Activated T-helper 1 cell treated with anti-CD3 and anti-CD28 coated beads, Interleukin-12 subunit alpha, Interleukin-12 subunit beta, Interleukin-2, Interleukin-4 antibody, amounts not matched to agents 30 ng/mL and 10 ng/mL and 1 ng/mL, durations not matched to agents 14 hours and 24 hours and 36 hours (primary cell): ENCODE measurements at regions of chr17 and their contacts with region 1.

Region 1: DNA sequence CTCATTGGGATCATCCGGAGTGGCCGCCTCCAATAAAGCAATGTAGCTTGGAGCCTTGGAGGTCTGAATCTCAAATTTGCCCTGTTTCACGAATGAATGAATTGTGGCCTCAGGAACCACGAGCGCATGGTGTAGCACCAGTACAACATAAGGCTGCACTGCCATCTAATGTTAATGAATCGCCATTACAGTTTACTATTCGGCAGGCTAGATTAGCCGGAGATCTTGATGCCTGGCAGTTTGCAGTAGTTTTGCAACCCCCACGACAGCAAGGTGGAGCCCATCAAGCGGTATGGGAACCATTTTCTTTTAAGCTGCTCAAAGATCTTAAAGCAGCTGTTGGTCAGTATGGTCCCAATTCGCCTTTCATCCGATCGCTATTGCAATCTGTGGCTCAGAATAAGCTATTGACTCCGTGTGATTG is 18.8 kb downstream of the ALOX15B start:
- DNase-seq: peak; percentile 26
- H3K4me3 Mint-ChIP-seq: no peak overlapping the region
- H3K27ac Mint-ChIP-seq: no peak overlapping the region
- H3K4me1 Mint-ChIP-seq: peaks cover 27% of the 10 kb centered on the region
- H3K27me3 Mint-ChIP-seq: peaks cover 50% of the 10 kb centered on the region

Region 2: DNA sequence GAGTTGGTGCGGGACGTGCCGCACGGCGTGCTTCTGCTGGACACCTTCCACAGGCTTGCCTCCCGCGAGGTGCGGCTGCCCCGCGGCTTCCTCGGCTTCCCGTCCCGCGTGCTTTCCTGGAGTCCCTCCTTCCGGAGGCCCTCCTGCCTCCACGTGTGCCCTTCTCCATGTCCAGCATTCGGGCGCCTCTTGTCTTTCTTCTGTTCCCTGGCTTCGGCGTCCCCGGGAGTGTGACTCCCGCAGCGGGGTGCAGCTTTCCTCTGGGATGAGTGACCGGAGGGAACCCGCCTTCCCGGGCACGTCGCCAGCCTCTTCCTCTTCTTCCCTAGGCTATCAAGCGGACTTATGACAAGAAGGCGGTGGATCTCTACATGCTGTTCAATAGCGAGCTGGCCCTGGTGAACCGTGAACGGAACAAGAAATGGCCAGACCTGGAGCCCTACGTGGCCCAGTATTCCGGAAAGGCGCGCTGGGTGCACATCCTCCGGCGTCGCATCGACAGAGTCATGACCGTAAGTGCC is 317.2 kb before region 1 on chr17:
- intact Hi-C with region 1: loop called (anchors 5 kb)
- DNase-seq: no peak
- H3K4me3 Mint-ChIP-seq: no peak overlapping the region
- H3K27ac Mint-ChIP-seq: no peak overlapping the region
- H3K4me1 Mint-ChIP-seq: no peaks in the 10 kb centered on the region
- H3K27me3 Mint-ChIP-seq: peaks cover 17% of the 10 kb centered on the region

Region 3: DNA sequence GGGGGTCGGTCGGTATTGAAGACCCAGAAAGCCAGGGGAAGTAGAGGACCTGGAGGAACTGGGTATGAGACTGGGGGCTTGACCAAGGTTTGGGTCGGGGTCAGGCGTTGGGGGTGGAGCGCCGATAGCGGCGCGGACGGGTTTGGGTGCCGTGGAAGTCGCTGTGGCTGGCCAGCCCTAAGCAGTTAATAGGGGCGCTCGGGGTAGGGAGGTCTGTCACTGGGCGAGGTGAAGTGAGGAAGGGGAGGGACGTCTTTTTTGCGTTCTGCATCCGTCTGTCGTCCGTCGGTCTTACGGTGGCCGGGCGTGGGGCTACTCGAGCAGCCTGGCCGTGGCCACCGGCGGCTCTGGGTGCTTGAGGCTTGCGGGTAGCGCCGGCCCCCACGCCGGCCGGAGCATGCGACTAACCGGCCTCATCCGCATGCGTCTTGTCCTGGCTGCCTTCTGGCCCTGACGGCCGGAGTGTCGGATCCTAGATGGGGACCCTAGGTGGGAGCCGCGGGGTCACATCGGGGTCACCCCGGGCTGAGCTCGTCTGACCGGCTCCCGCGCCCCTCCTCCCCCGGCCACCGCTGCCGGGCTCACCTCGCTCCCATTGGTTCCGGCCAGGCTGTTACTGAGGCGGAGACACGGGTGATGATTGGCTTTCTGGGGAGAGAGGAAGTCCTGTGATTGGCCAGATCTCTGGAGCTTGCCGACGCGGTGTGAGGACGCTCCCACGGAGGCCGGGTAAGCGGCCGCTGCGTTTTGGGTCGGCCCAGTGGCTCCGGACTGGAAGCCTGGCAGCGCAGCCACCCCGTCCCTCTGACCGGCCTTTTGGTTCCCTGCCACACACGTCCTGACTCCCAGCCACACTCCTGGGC is 213.2 kb before region 1 on chr17:
- intact Hi-C with region 1: loop called (anchors 5 kb)
- DNase-seq: peak; percentile 87
- H3K4me3 Mint-ChIP-seq: peak overlapping the region; percentile 89
- H3K27ac Mint-ChIP-seq: peak overlapping the region; percentile 96
- H3K4me1 Mint-ChIP-seq: peaks cover 37% of the 10 kb centered on the region
- H3K27me3 Mint-ChIP-seq: no peaks in the 10 kb centered on the region

Region 4: GRCh38 chr17:7897773-7898172 is 159.9 kb before region 1 on chr17:
- intact Hi-C with region 1: no loop called
- DNase-seq: no peak
- H3K4me3 Mint-ChIP-seq: peak overlapping the region; percentile 3
- H3K27ac Mint-ChIP-seq: peak overlapping the region; percentile 79
- H3K4me1 Mint-ChIP-seq: peaks cover 8% of the 10 kb centered on the region
- H3K27me3 Mint-ChIP-seq: no peaks in the 10 kb centered on the region

Region 5: DNA sequence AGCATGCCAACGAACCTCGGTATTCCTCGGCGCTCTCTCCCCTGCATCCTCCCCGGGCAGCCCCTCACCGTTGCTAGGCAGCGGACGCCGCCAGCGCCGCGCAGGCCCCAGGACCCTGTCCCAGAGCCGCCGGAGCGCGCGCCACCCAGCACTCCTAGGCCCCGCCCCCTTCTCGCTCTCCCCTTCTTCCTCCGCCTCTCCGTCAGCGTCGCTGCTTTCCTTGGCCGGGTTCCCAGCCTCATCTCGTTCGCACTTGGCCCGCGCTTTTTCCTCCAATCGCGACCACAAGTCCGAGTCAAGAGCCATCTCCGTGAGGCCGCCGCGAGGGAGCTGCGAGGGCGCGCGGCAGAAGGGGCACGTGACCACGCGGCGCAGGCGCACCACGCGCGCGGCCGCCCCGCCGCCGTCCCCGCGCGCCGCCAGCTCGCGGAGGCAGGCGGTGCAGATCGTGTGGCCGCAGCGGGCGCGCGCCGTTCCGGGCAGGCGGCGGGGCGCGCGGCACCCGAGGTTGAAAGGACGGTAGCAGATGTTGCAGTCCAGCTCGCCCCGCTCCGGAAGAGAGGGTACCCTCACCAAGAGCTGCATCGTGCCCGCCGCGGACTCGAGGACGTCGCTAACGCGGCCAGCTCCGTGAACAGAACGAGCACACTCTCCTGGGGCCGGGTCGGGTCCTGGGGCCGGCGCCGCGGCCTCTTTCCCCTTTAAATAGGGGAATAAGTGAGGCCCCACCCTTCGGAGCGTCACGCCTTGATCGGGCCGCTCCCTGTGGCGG is 141.9 kb before region 1 on chr17 and contains the start of gene RNF227:
- intact Hi-C with region 1: loop called (anchors 1 kb)
- DNase-seq: peak; percentile 77
- H3K4me3 Mint-ChIP-seq: peak within 1 kb of the TSS; percentile 92
- H3K27ac Mint-ChIP-seq: peak within 1 kb of the TSS; percentile 96
- H3K4me1 Mint-ChIP-seq: peaks cover 33% of the 10 kb centered on the region
- H3K27me3 Mint-ChIP-seq: no peaks in the 10 kb centered on the region
- total RNA-seq, gene RNF227: 6.2 and 6.3 TPM in 2 replicates

Region 6: DNA sequence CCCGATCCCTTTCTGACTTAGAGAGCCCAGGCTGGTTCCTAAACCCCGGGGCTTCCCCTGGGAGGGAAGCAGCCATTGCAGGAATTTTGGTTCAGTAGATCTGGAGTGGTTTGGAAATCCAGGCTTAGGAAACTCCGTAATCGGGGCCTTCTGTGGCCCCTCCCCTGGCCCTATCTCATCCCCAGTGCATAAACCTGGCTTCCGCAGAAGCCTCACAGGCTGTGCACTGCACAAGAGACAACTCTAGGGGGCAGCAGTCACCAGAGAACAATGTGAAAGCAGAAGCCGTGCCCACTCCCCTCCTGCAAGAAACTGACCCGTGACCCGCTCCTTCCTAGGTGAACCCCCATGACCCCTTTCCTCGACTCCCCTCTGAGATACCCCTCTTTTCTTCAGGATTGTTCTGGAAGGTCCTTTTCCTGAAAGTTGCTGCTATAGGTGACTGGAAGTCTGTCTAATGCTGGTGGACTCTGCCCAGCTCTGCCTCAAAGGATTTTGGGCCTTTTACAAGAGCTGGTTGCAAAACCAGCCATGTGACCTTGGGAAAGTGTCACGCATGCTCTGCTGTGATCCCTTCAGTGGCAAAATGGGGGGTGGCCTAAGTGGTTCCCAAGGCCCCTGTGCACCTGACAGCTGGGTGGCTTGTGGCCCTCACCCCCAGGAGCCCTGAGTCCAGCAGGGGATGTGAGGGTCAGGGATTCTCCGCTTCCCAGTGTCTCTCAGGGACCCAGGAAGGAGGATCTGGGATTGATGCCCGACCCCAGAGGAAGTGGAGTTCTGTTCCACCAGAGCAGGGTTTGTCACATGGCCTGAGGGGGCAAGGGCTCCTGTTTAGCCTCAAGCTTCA is 40.8 kb before region 1 on chr17:
- intact Hi-C with region 1: loop called (anchors 1 kb)
- DNase-seq: peak; percentile 44
- H3K4me3 Mint-ChIP-seq: peak overlapping the region; percentile 81
- H3K27ac Mint-ChIP-seq: no peak overlapping the region
- H3K4me1 Mint-ChIP-seq: peaks cover 12% of the 10 kb centered on the region
- H3K27me3 Mint-ChIP-seq: peaks cover 30% of the 10 kb centered on the region

Region 7: GRCh38 chr17:8073627-8074484 is 16.2 kb after region 1 on chr17:
- intact Hi-C with region 1: loop called (anchors 1 kb)
- DNase-seq: peak; percentile 75
- H3K4me3 Mint-ChIP-seq: peak overlapping the region; percentile 72
- H3K27ac Mint-ChIP-seq: peak overlapping the region; percentile 57
- H3K4me1 Mint-ChIP-seq: peaks cover 22% of the 10 kb centered on the region
- H3K27me3 Mint-ChIP-seq: peaks cover 43% of the 10 kb centered on the region

Region 8: DNA sequence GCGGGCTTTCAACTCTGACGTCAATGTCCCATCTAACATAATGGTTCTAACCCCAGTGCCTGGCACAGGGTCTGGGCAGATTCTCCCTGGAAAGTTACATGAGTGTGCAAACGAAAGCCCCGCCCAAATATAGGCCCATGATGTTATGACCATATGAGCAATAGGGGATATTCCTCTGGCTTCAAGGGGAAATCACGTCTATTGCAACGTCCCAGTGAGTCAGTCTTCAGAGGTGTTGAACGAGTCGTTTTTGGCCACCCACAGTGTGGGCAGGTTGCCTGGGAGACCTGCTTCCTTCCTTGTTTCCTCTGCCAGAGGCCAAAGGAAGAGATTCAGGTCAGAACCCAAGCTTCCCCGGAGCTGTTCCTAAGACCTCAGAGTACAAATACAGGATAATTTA is 877.5 kb after region 1 on chr17:
- intact Hi-C with region 1: loop called (anchors 5 kb)
- DNase-seq: no peak
- H3K4me3 Mint-ChIP-seq: peak overlapping the region; percentile 68
- H3K27ac Mint-ChIP-seq: peak overlapping the region; percentile 93
- H3K4me1 Mint-ChIP-seq: peaks cover 59% of the 10 kb centered on the region
- H3K27me3 Mint-ChIP-seq: no peaks in the 10 kb centered on the region